Heart left ventricle (tissue), 16 donors: ENCODE measurements at regions of chr3 and their contacts with region 1.

Region 1: DNA sequence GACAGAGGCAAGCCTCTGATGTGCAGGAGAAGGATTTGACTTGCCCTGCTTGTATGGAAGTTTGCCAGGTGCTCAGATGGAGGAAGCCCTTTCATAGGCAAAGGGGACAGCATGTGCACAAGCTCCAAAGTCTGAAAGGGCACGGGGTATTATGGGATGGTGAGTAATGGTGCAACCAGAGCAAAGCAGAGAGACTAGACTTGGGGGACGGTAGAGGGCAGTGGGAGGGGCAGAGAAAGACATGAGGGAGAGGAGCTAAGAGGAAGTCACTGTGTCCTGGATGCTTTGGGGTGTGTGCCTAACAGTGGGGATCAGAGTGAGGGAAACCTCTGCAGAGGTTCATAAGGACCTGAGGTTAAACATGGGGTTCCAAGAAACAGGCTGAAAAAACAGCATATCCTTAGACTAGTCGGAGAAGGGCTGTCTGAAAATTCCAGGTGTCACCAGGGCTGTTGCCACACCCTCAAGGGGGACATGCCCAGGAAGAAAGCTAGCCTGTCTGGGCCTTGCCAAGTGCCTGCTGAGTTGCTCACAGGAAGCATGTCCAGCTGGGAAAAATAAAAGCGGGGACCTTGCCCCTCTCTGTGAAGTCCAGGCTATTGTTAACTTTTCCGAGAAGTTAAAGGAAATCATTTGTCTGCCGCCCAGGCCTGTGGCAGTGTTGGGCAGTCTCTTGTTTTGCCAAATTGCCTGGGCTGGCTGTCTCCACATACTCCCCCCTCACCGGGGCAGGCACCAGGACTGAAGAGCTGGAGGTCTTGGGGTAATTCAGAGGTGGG is 47.1 kb downstream of the HRH1 start:
- DNase-seq: peak in 2 of 5 donors; percentile 34 to 54
- ATAC-seq: peak; percentile 54 to 86 (median 78)
- H3K4me3 ChIP-seq: no peak overlapping the region
- H3K27ac ChIP-seq: peak overlapping the region in 7 of 12 donors; percentile 22 to 67 (median 44)
- H3K4me1 ChIP-seq: peaks cover 0 to 22% (median 5%) of the 10 kb centered on the region in 12 donors
- H3K27me3 ChIP-seq: no peaks in the 10 kb centered on the region
- CTCF ChIP-seq: no peak
- POLR2A ChIP-seq: no peak

Region 2: GRCh38 chr3:10758304-10759061 is 443.0 kb before region 1 on chr3:
- intact Hi-C with region 1: loop called in 1 of 10 experiments (anchors 5 kb)
- DNase-seq: peak in 4 of 5 donors; percentile 36 to 45 (median 41)
- ATAC-seq: peak; percentile 69 to 88 (median 84)
- H3K4me3 ChIP-seq: no peak overlapping the region
- H3K27ac ChIP-seq: no peak overlapping the region
- H3K4me1 ChIP-seq: no peaks in the 10 kb centered on the region
- H3K27me3 ChIP-seq: peaks cover 0 to 43% (median 11%) of the 10 kb centered on the region in 9 donors
- CTCF ChIP-seq: peak; percentile 49 to 74 (median 64)
- POLR2A ChIP-seq: no peak

Region 3: GRCh38 chr3:10945683-10946287 is 255.7 kb before region 1 on chr3:
- intact Hi-C with region 1: loop called in 3 of 10 experiments (anchors 10 kb)
- DNase-seq: peak; percentile 47 to 76 (median 61)
- ATAC-seq: peak; percentile 20 to 89 (median 84)
- H3K4me3 ChIP-seq: no peak overlapping the region
- H3K27ac ChIP-seq: no peak overlapping the region
- H3K4me1 ChIP-seq: peaks cover 0 to 8% (median 0%) of the 10 kb centered on the region in 12 donors
- H3K27me3 ChIP-seq: peaks cover 0 to 31% (median 0%) of the 10 kb centered on the region in 9 donors
- CTCF ChIP-seq: peak; percentile 71 to 94 (median 83)
- POLR2A ChIP-seq: no peak

Region 4: GRCh38 chr3:11060500-11061251 is 140.8 kb before region 1 on chr3:
- intact Hi-C with region 1: loop called in 6 of 10 experiments (anchors 2 to 10 kb)
- DNase-seq: peak; percentile 49 to 80 (median 61)
- ATAC-seq: peak in 3 of 4 donors; percentile 78 to 82 (median 79)
- H3K4me3 ChIP-seq: peak overlapping the region in 6 of 12 donors; percentile 13 to 43 (median 33)
- H3K27ac ChIP-seq: no peak overlapping the region
- H3K4me1 ChIP-seq: peaks cover 0 to 10% (median 3%) of the 10 kb centered on the region in 12 donors
- H3K27me3 ChIP-seq: peaks cover 0 to 34% (median 0%) of the 10 kb centered on the region in 9 donors
- CTCF ChIP-seq: peak; percentile 79 to 95 (median 86)
- POLR2A ChIP-seq: no peak

Region 5: DNA sequence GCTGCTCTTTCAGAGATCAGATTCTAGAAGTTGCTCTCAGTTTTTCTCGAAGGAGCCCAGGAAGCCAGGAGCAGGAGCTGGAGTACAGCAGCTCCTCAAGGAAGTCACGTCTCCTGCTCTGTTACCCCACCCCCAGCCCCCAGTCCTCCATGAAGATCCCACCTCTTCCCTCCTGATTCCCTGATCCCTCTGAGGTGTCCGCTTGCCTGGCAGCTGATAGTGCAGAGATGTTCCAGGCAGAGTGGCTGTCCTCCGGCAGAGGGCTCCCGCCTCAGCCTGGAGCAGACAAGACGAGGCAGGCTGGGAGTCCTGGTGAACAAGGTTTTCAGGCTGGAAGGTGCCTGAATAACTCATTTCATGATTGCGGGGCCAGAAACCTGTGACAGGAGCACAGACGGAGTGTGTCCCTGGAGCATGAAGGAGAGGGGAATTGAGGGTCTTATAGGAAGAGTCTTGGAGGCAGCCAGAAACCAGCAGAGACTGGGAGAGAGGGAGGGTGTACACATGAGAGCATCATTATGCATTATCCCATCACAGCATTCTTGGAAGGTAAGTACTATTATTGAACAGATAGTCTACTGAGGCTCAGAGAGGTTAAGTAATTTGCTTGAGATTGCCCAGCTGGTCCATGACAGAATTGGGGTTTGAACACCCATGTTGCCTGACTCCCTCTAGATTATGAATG is 46.0 kb before region 1 on chr3:
- intact Hi-C with region 1: loop called in 9 of 10 experiments (anchors 2 to 5 kb)
- DNase-seq: peak; percentile 59 to 79 (median 70)
- ATAC-seq: peak; percentile 79 to 92 (median 88)
- H3K4me3 ChIP-seq: peak overlapping the region; percentile 42 to 68 (median 55)
- H3K27ac ChIP-seq: peak overlapping the region in 4 of 12 donors; percentile 46 to 72 (median 60)
- H3K4me1 ChIP-seq: peaks cover 0 to 65% (median 10%) of the 10 kb centered on the region in 12 donors
- H3K27me3 ChIP-seq: peaks cover 0 to 24% (median 10%) of the 10 kb centered on the region in 9 donors
- CTCF ChIP-seq: peak; percentile 39 to 80 (median 59)
- POLR2A ChIP-seq: no peak

Region 6: GRCh38 chr3:11178421-11178820 is 23.0 kb before region 1 on chr3:
- intact Hi-C with region 1: loop called in 1 of 10 experiments (anchors 1 kb)
- DNase-seq: no peak
- ATAC-seq: no peak
- H3K4me3 ChIP-seq: no peak overlapping the region
- H3K27ac ChIP-seq: no peak overlapping the region
- H3K4me1 ChIP-seq: no peaks in the 10 kb centered on the region
- H3K27me3 ChIP-seq: no peaks in the 10 kb centered on the region
- CTCF ChIP-seq: no peak
- POLR2A ChIP-seq: no peak